Heart right ventricle (tissue), 16 donors: ENCODE measurements at regions of chr9 and their contacts with region 1.

Region 1: DNA sequence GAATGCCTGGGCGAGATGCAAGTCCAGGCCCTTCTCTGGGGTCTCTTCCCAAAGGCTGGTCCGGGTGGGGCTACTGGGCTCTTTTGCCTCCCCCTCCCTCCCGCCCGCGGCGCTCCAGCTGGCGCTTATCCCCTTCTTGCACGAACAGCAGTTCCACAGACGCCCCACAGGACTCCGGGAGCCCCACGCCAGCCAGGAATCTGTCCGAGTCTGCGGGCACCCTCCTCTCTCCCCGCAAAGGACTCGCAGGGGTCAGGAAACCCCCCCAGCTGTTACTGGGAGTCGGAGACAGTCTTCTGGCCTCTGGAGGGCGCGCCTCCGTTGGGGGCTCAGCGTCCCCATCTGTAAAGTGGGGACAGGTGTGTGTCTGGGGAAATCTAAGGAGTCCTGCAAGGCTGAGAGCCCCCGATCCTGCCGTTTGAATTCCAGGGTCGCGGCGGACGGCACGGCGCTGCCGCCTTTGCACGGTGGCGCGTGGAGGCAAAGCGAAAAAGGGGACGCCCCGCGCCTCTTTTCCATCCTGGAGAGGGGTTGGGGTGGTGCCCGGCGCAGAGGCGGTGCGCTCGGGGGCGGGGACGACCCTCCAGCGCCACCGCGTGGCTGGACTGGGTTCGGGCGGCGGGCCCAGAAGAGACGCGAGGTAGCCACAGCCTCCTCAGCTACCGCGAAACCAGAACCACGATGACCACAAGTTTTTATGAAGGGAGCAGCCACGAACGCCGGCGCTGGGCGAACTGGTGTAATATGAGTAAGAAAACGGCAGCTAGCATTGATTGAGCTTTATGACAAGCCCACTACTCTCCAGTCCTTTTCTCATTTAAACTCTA is 2.9 kb upstream of the CCIN start:
- DNase-seq: peak; percentile 79 to 87
- ATAC-seq: peak; percentile 87 to 95 (median 91)
- H3K4me3 ChIP-seq: peak overlapping the region in 9 of 10 donors; percentile 33 to 60 (median 54)
- H3K27ac ChIP-seq: peak overlapping the region; percentile 15 to 90 (median 69)
- H3K4me1 ChIP-seq: peaks cover 8 to 49% (median 19%) of the 10 kb centered on the region in 9 donors
- H3K27me3 ChIP-seq: peaks cover 0 to 6% (median 0%) of the 10 kb centered on the region in 7 donors
- CTCF ChIP-seq: peak; percentile 93 to 99 (median 96)

Region 2: GRCh38 chr9:35954942-35955546 is 211.3 kb before region 1 on chr9:
- intact Hi-C with region 1: loop called in 5 of 10 experiments (anchors 5 to 10 kb)
- DNase-seq: peak in 1 of 2 donors; percentile 54
- ATAC-seq: peak; percentile 61 to 84 (median 77)
- H3K4me3 ChIP-seq: no peak overlapping the region
- H3K27ac ChIP-seq: peak overlapping the region in 1 of 10 donors; percentile 8
- H3K4me1 ChIP-seq: peaks cover 0 to 14% (median 3%) of the 10 kb centered on the region in 9 donors
- H3K27me3 ChIP-seq: no peaks in the 10 kb centered on the region
- CTCF ChIP-seq: peak; percentile 81 to 92 (median 90)

Region 3: GRCh38 chr9:36008774-36009300 is 157.5 kb before region 1 on chr9:
- intact Hi-C with region 1: loop called in 3 of 10 experiments (anchors 1 to 10 kb)
- DNase-seq: peak; percentile 26 to 34
- ATAC-seq: peak in 7 of 8 donors; percentile 64 to 87 (median 73)
- H3K4me3 ChIP-seq: no peak overlapping the region
- H3K27ac ChIP-seq: no peak overlapping the region
- H3K4me1 ChIP-seq: peaks cover 0 to 6% (median 0%) of the 10 kb centered on the region in 9 donors
- H3K27me3 ChIP-seq: peaks cover 0 to 6% (median 0%) of the 10 kb centered on the region in 7 donors
- CTCF ChIP-seq: peak; percentile 87 to 99 (median 95)

Region 4: DNA sequence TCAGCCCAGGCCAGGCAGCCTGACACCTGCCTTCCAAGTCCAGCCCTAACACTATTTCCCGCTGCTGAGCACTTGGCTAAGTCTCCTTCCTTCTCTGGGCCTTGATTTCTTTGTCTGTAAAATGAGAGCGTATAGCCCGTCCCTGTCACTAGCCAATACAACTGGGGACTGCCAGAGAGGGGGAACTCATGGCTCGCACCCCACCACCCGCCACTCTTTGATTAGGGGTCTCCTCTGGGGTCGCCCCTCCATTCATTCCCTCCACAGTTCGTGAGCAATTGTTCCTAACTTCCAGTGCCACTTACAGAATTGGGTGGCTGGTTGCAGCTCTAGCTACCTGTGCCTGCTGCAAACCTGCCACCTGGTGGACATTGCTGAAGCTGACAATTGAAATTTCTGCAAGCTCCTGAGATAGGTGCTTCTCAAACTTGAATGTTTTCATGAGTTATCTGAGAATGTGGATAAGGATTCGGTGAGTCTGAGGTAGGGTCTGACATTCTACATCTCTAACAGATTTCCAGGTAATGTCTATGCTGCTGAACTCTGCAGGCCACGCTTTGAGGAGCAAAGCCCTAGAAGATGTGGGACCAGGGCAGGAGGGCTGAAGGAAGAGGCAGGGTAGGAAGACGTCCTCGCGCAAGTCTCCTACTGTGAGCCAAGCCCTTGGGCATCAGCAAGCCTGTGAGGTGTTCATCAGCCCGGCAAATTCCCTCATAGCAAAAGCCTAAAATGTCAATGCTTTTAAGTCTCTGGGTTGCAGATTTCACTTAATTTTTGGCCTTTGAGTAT is 142.9 kb before region 1 on chr9:
- intact Hi-C with region 1: loop called in 1 of 10 experiments (anchors 10 kb)
- DNase-seq: peak; percentile 29 to 62
- ATAC-seq: peak; percentile 17 to 72 (median 60)
- H3K4me3 ChIP-seq: no peak overlapping the region
- H3K27ac ChIP-seq: no peak overlapping the region
- H3K4me1 ChIP-seq: peaks cover 0 to 11% (median 0%) of the 10 kb centered on the region in 9 donors
- H3K27me3 ChIP-seq: no peaks in the 10 kb centered on the region
- CTCF ChIP-seq: peak; percentile 64 to 88 (median 83)

Region 5: GRCh38 chr9:36102742-36103495 is 63.4 kb before region 1 on chr9:
- intact Hi-C with region 1: loop called (anchors 1 to 5 kb)
- DNase-seq: peak; percentile 76 to 81
- ATAC-seq: peak; percentile 87 to 97 (median 91)
- H3K4me3 ChIP-seq: no peak overlapping the region
- H3K27ac ChIP-seq: no peak overlapping the region
- H3K4me1 ChIP-seq: peaks cover 0 to 8% (median 0%) of the 10 kb centered on the region in 9 donors
- H3K27me3 ChIP-seq: no peaks in the 10 kb centered on the region
- CTCF ChIP-seq: peak; percentile 61 to 89 (median 80)

Region 6: GRCh38 chr9:36204906-36205547 is 38.7 kb after region 1 on chr9:
- intact Hi-C with region 1: no loop called
- DNase-seq: no peak
- ATAC-seq: peak; percentile 17 to 85 (median 72)
- H3K4me3 ChIP-seq: no peak overlapping the region
- H3K27ac ChIP-seq: peak overlapping the region in 5 of 10 donors; percentile 8 to 54 (median 32)
- H3K4me1 ChIP-seq: peaks cover 0 to 53% (median 43%) of the 10 kb centered on the region in 9 donors
- H3K27me3 ChIP-seq: no peaks in the 10 kb centered on the region
- CTCF ChIP-seq: peak in 6 of 9 donors; percentile 19 to 47 (median 36)

Region 7: DNA sequence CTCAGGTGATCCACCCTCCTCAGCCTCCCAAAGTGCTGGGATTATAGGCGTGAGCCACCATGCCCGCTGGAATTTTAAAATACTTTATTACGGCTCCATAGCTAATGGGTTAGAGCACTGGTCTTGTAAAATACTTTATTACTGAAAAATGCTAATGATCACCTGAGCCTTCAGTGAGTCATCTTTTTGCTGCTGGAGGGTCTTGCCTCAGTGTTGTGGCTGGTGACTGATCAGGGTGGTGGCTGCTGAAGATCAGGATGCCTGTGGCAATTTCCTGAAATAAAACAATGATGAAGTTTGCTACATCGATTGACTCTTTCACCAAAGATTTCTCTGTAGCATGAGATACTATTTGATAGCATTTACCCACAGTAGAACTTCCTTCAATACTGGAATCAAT is 117.9 kb after region 1 on chr9:
- intact Hi-C with region 1: no loop called
- DNase-seq: no peak
- ATAC-seq: no peak
- H3K4me3 ChIP-seq: no peak overlapping the region
- H3K27ac ChIP-seq: no peak overlapping the region
- H3K4me1 ChIP-seq: no peaks in the 10 kb centered on the region
- H3K27me3 ChIP-seq: no peaks in the 10 kb centered on the region
- CTCF ChIP-seq: no peak